Activated CD4-positive, alpha-beta T cell treated with anti-CD3 and anti-CD28 coated beads for 36 hours (primary cell): ENCODE measurements at regions of chr7 and their contacts with region 1.

Region 1: GRCh38 chr7:44847508-44847920 is 373 bp downstream of the H2AZ2 start:
- DNase-seq: peak; percentile 93
- ATAC-seq: peak; percentile 70
- H3K4me3 Mint-ChIP-seq: peak overlapping the region; percentile 95
- H3K27ac Mint-ChIP-seq: peak overlapping the region; percentile 97
- H3K4me1 Mint-ChIP-seq: peaks cover 38% of the 10 kb centered on the region
- H3K27me3 Mint-ChIP-seq: no peaks in the 10 kb centered on the region

Region 2: GRCh38 chr7:44581879-44582603 is 265.5 kb before region 1 on chr7 and contains the start of gene TMED4:
- CTCF ChIA-PET with region 1: interaction called, 5 read pairs
- POLR2A ChIA-PET with region 1: interaction called, 5 read pairs
- intact Hi-C with region 1: loop called (anchors 1 kb)
- DNase-seq: peak; percentile 100
- ATAC-seq: peak; percentile 95
- H3K4me3 Mint-ChIP-seq: peak within 1 kb of the TSS; percentile 85
- H3K27ac Mint-ChIP-seq: peak within 1 kb of the TSS; percentile 92
- H3K4me1 Mint-ChIP-seq: peaks cover 33% of the 10 kb centered on the region
- H3K27me3 Mint-ChIP-seq: no peaks in the 10 kb centered on the region
- total RNA-seq, gene TMED4: 71.6 to 73.0 TPM

Region 3: DNA sequence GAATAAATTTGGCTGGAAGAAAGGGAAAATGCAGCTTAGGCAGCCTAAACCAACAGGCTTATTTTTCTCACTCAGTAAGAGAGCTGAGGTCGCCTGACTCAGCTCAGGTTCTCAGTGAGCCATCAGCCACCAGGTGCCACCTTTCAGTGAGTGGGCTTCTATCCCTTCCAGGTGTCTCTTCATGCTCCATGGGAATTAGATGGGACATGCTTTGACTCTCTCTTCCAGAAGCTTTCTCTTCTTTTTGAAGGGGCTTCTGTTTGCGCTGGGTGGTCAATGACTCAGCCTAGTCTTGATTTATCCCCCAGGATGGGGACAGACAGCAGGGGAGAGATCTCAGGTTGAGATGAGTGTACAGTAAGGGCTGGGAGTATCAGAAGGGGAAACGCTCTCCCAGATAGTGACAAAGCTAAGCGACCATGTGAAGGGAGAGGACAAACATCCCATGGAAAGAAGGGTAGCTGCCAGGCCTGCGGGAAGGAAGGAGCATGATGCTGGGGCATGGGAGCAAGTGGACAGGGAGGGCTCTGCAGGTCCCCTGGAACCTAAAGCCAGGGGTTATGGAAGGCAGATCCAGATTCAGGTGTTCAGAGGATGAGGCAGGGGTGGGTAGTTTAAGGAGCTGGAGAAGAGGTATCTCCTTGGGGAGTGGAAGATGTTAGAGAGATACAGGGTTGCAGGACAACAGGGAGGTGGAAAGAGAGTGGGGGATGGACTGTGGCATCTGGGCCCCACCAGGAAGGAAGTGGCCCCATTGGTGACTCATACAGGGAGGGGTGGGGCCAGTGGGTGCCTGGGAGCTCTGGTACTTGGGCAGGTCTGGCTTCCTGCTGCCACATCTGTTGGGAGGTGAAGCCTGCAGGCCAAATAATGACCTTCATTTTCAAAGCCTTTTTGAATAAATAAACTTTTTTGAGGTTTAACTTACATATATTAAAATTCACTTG is 208.6 kb before region 1 on chr7:
- CTCF ChIA-PET with region 1: interaction called, 3 read pairs
- POLR2A ChIA-PET with region 1: interaction called, 6 read pairs
- intact Hi-C with region 1: loop called (anchors 1 to 2 kb)
- DNase-seq: peak; percentile 90
- ATAC-seq: peak; percentile 71
- H3K4me3 Mint-ChIP-seq: peak overlapping the region; percentile 73
- H3K27ac Mint-ChIP-seq: peak overlapping the region; percentile 100
- H3K4me1 Mint-ChIP-seq: peaks cover 75% of the 10 kb centered on the region
- H3K27me3 Mint-ChIP-seq: no peaks in the 10 kb centered on the region

Region 4: DNA sequence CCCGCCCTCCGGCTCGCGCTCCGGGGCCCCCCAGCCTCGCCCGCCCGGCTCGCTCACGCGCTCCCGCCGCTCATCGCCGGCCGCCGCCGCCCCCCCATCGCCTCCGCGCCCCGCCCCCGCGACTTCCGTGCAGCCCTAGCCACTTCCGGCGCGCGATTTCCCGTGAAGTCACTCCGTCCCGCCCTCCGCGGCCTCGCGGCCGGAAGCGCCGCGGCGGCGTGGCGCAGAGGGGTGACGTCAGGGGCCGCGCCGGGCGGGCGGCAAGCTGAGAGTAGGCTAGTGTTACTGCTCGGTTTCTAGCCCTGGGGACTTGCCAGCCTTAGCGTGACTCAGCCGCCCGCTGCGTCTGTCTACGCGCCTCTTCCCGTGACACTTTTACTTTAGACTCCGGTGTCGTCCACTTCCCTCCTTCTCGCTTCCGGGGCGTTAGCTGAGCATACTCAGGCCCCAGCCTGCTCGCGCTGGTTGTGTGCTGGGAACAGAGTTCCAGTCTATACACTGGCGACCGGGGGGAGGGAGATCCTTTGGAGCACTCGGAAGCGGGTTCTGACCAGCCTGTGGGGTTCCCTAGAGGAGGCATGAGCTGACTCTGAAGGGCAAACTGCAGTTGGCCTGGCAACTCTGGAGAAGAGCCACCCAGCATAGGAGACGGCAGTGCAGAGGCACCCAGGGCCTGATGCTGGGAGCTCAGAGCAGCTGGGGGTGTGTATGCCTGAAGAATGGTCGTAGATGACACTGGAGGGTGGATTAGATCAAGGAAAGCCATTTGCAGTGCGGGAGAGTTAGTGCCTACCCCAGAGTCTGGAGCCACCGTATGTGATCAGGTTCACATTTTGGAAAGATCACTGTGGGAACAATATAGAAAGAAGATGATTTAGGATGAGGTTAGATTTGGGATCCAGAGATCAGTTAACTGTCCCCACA is 38.1 kb after region 1 on chr7 and contains the start of gene PURB:
- CTCF ChIA-PET with region 1: interaction called, 21 read pairs
- POLR2A ChIA-PET with region 1: interaction called, 36 read pairs
- intact Hi-C with region 1: loop called (anchors 1 kb)
- DNase-seq: peak; percentile 98
- ATAC-seq: peak; percentile 97
- H3K4me3 Mint-ChIP-seq: peak within 1 kb of the TSS; percentile 86
- H3K27ac Mint-ChIP-seq: peak within 1 kb of the TSS; percentile 98
- H3K4me1 Mint-ChIP-seq: peaks cover 51% of the 10 kb centered on the region
- H3K27me3 Mint-ChIP-seq: no peaks in the 10 kb centered on the region
- total RNA-seq, gene PURB: 18.8 to 20.8 TPM

Region 5: DNA sequence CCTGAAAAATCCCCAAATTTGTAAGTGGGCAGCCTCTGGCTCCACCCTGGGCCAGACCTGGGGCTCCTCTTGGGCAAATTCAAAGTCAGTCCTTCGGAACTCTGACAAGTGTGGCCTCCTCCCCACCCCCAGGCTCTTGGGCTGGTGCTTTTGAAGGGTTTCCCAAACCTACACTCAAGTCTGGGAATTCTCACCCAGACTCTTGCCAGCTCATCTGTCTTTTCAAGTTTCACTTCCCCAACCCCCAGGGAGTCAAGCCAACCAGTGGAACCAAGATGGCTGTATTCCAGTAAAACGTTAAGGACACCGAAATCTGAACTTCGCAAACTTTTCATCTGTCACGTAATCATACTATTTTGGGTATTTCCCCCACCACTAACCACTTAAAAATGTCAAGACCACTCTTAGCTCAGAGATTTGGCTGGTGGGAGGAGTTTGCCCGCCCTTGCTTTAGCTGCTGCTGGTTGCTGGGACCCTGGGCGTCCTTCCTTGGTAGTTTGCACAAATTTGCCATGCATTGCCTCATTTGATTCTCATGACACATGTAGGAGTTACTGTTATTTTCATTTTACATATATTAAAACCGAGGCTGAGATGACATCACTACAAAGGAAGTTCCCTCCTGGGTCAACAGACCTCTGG is 133.0 kb after region 1 on chr7:
- CTCF ChIA-PET with region 1: interaction called, 3 read pairs
- POLR2A ChIA-PET with region 1: interaction called, 13 read pairs
- intact Hi-C with region 1: loop called (anchors 1 to 2 kb)
- DNase-seq: peak; percentile 94
- ATAC-seq: peak; percentile 48
- H3K4me3 Mint-ChIP-seq: peak overlapping the region; percentile 99
- H3K27ac Mint-ChIP-seq: peak overlapping the region; percentile 99
- H3K4me1 Mint-ChIP-seq: peaks cover 68% of the 10 kb centered on the region
- H3K27me3 Mint-ChIP-seq: no peaks in the 10 kb centered on the region